WTC11 (cell line): ENCODE measurements at regions of chr20 and their contacts with region 1.

Region 1: DNA sequence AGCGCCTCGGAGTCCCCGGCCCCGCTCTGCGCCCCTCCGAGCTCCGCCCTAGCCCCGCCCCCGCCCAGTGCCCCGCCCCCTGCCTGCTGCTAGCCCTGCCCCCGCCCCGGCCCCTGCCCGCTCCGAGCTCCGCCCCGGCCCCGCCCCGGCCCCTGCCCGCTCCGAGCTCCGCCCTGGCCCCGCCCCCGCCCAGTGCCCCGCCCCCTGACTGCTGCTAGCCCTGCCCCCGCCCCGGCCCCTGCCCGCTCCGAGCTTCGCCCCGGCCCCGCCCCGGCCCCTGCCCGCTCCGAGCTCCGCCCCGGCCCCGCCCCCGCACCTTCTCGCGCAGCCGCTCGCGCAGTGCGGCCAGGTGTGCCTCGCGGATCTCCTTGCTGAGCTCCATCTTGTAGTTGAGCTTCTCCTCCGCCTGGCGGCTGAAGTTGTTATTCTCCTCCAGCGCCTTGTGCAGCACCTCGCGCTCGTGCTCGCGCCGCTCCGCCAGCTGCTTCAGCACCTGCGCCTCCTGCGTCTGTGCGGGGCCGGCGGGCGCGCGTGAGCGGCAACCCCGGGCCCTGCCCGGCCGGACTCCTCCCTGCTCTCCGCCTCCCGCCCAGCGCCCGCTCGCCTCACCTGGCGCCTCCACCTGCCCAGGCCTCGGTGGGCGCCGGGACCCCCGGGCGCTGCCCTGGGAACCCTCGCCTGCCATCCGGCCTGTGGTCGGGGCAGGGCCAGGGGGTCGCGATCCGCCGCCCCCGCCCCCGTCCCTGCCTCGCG is 11.3 kb downstream of the STMN3 start:
- DNase-seq: peak; percentile 97
- ATAC-seq: peak; percentile 77
- H3K4me3 Mint-ChIP-seq: peak overlapping the region; percentile 72
- H3K27ac Mint-ChIP-seq: no peak overlapping the region
- H3K4me1 Mint-ChIP-seq: peaks cover 9% of the 10 kb centered on the region
- H3K27me3 Mint-ChIP-seq: no peaks in the 10 kb centered on the region
- CTCF ChIP-seq: no peak

Region 2: DNA sequence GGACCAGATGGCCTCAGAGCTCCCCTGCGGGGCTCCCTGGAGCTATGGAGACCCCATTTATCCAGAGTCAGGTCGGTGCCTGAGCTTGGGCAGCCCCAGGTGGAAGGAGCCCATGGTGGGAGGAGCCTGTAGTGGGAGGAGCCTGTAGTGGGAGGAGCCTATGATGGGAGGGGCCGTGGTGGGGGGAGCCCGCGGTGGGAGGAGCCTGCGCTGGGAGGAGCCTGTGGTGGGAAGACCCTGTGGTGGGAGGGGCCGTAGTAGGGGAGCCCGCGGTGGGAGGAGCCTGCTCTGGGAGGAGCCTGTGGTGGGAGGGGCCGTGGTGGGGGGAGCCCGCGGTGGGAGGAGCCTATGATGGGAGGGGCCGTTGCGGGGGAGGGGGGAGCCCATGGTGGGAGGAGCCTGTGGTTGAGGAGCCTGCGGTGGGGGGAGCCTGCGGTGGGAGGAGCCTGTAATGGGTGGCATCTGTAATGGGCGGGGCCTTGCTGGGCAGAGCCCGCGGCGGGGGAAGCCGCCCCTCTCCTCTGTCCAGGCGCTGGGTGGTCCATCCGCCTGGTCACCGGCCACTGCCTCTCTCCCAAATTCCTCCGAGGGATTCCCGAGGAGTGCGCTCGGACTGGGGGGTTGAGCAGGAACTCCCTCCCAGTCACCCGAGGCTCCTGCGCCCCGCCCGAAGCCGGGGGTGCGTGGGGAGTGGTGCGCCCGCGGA is 88.6 kb before region 1 on chr20:
- CTCF ChIA-PET with region 1: interaction called, 13 read pairs
- POLR2A ChIA-PET with region 1: interaction called, 4 read pairs
- DNase-seq: peak; percentile 97
- ATAC-seq: peak; percentile 85
- H3K4me3 Mint-ChIP-seq: peak overlapping the region; percentile 68
- H3K27ac Mint-ChIP-seq: no peak overlapping the region
- H3K4me1 Mint-ChIP-seq: peaks cover 22% of the 10 kb centered on the region
- H3K27me3 Mint-ChIP-seq: no peaks in the 10 kb centered on the region
- CTCF ChIP-seq: no peak

Region 3: DNA sequence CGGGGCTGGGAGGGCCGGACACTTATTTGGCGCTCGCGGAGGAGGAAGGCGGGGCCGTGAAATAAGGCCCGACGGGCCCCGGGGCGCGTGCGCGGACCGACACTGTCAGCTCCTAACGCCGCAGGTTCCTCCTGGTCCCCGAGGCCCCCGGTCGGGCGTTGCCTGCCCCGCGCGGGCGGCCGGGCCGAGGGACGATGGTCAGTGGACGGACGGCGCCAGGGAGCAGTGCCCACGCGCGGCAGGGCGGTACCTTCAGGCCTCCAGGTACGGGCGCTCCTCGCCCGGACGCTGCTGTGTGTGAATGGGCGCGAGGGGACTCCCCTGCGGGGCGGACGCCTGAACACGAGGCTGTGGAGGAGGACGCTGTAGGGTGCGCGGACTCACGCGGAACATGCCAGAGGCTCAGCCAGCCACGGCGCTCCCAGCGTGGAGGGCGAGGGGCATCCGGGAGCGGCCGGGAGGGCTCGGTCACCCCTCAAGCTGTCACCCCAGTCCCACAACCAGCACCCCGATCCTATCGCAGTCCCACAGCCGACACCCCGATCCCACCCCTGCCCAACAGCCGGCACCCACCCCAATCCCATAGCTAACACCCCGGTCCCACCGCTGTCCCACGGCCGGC is 14.7 kb before region 1 on chr20:
- CTCF ChIA-PET with region 1: interaction called, 24 read pairs
- POLR2A ChIA-PET with region 1: interaction called, 13 read pairs
- DNase-seq: peak; percentile 92
- ATAC-seq: peak; percentile 75
- H3K4me3 Mint-ChIP-seq: peak overlapping the region; percentile 65
- H3K27ac Mint-ChIP-seq: no peak overlapping the region
- H3K4me1 Mint-ChIP-seq: peaks cover 21% of the 10 kb centered on the region
- H3K27me3 Mint-ChIP-seq: peaks cover 3% of the 10 kb centered on the region; the same call in 1 of the 2 replicates
- CTCF ChIP-seq: no peak

Region 4: DNA sequence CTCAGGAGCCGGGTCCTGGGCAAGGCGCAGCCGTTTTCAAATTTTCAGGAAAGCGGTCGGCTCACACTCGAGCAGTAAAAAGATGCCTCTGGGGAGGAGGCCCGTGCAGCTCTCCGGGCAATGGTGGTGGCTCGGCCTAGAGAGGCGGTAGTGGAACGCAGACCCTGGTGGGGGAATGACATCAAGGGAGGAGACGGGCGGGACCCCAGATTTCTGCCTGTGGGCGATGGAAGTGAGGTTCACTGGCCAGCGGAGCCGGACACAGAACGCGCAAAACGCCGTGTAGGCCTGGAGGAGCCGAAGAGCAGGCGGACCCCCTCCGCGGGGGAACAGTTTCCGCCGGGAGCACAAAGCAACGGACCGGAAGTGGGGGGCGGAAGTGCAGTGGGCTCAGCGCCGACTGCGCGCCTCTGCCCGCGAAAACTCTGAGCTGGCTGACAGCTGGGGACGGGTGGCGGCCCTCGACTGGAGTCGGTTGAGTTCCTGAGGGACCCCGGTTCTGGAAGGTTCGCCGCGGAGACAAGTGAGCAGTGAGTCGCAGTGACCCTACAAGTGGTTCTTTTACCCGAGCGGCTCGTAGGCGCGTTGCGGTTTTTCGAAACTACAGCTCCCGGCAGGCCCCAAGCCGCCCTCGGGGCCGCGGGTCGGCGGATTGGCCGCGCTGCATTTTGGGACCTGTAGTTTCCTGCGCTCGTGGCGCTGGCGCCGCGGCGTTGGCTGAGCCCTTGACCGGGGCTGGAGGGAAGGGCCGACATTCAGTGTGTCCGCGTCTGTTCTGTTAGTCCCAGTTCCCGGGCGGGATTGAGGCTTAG is 16.2 kb after region 1 on chr20 and contains the start of gene RTEL1:
- CTCF ChIA-PET with region 1: interaction called, 50 read pairs
- POLR2A ChIA-PET with region 1: interaction called, 23 read pairs
- DNase-seq: peak; percentile 92
- ATAC-seq: peak; percentile 83
- H3K4me3 Mint-ChIP-seq: peak within 1 kb of the TSS; percentile 89
- H3K27ac Mint-ChIP-seq: peak within 1 kb of the TSS; percentile 87
- H3K4me1 Mint-ChIP-seq: peaks cover 23% of the 10 kb centered on the region
- H3K27me3 Mint-ChIP-seq: no peaks in the 10 kb centered on the region
- CTCF ChIP-seq: no peak
- total RNA-seq, gene RTEL1: 39.3 to 44.9 TPM (median 40.5 TPM) in 3 replicates

Region 5: GRCh38 chr20:63698739-63699465 is 56.9 kb after region 1 on chr20:
- CTCF ChIA-PET with region 1: interaction called, 14 read pairs
- POLR2A ChIA-PET with region 1: interaction called, 3 read pairs
- DNase-seq: no peak
- ATAC-seq: no peak
- H3K4me3 Mint-ChIP-seq: no peak overlapping the region
- H3K27ac Mint-ChIP-seq: no peak overlapping the region
- H3K4me1 Mint-ChIP-seq: peaks cover 7% of the 10 kb centered on the region
- H3K27me3 Mint-ChIP-seq: no peaks in the 10 kb centered on the region
- CTCF ChIP-seq: no peak

Region 6: DNA sequence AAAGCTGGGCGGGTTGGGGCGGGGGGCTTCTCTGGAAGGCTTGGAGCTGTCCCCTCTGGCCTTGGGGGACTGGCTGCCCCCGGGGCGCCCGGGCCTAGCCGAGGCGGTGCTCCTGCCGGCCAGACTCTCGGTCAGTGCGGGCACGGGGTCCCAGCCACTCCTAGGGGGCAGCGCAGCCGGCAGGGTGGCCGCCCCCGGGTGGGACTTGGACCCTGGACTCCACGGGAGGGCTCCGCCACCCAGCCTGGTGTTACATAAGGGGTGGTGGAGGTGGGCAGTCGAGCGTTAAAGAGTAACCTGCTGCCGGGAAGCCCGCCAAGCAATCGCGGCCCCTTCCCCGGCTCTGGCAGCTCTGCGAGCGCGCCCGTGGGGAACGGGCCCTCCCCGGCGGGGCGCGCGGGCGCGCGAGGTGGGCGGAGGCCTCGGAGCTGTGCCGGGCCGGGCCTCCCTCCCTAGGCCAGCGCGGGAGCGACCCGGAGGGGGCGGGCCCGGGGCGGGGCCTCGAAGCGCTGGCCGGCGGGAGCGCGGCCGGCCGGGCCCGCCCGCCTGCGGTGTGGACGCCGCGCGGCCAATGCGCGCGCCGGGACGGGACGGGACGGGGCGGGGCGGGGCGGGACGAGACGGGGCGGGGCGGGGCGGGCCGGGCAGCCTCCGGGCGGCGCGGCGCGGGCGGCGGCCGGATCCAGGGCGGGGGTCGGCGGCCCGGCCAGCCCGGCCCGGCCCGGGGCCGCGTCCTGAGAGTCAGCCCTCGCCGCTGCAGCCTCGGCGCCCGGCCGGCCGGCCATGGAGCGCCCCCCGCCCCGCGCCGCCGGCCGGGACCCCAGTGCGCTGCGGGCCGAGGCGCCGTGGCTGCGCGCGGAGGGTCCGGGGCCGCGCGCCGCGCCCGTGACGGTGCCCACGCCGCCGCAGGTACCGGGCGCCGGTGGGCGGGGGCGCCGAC is 97.4 kb after region 1 on chr20 and contains the start of gene SLC2A4RG:
- CTCF ChIA-PET with region 1: interaction called, 11 read pairs
- POLR2A ChIA-PET with region 1: no interaction called
- DNase-seq: peak; percentile 58
- ATAC-seq: peak; percentile 61
- H3K4me3 Mint-ChIP-seq: peak within 1 kb of the TSS; percentile 60
- H3K27ac Mint-ChIP-seq: no peak within 1 kb of the TSS
- H3K4me1 Mint-ChIP-seq: no peaks in the 10 kb centered on the region
- H3K27me3 Mint-ChIP-seq: no peaks in the 10 kb centered on the region
- CTCF ChIP-seq: no peak
- total RNA-seq, gene SLC2A4RG: 41.6 to 47.2 TPM (median 43.3 TPM) in 3 replicates